ENCODE measurements at regions of chr4 and their contacts with region 1.

Region 1: GRCh38 chr4:68175562-68176155 is 46.0 kb upstream of the TMPRSS11F start:
- DNase-seq: peak in 4 of 5 donors; percentile 11 to 25 (median 17)
- H3K4me3 ChIP-seq: no peak overlapping the region
- H3K4me3 Mint-ChIP-seq: no peak overlapping the region
- H3K27ac ChIP-seq: no peak overlapping the region
- H3K27ac Mint-ChIP-seq: no peak overlapping the region
- H3K4me1 ChIP-seq: no peaks in the 10 kb centered on the region
- H3K4me1 Mint-ChIP-seq: peaks cover 0 to 2% (median under 1%) of the 10 kb centered on the region in 4 donors
- H3K27me3 ChIP-seq: no peaks in the 10 kb centered on the region
- H3K27me3 Mint-ChIP-seq: peaks cover 3 to 4% of the 10 kb centered on the region in 2 donors

Region 2: GRCh38 chr4:66876946-66877345 is 1298.7 kb before region 1 on chr4:
- CTCF ChIA-PET with region 1: no interaction called
- POLR2A ChIA-PET with region 1: no interaction called
- intact Hi-C with region 1: no loop called
- DNase-seq: no peak
- H3K4me3 ChIP-seq: no peak overlapping the region
- H3K4me3 Mint-ChIP-seq: no peak overlapping the region
- H3K27ac ChIP-seq: no peak overlapping the region
- H3K27ac Mint-ChIP-seq: no peak overlapping the region
- H3K4me1 ChIP-seq: no peaks in the 10 kb centered on the region
- H3K4me1 Mint-ChIP-seq: no peaks in the 10 kb centered on the region
- H3K27me3 ChIP-seq: no peaks in the 10 kb centered on the region
- H3K27me3 Mint-ChIP-seq: no peaks in the 10 kb centered on the region

Region 3: DNA sequence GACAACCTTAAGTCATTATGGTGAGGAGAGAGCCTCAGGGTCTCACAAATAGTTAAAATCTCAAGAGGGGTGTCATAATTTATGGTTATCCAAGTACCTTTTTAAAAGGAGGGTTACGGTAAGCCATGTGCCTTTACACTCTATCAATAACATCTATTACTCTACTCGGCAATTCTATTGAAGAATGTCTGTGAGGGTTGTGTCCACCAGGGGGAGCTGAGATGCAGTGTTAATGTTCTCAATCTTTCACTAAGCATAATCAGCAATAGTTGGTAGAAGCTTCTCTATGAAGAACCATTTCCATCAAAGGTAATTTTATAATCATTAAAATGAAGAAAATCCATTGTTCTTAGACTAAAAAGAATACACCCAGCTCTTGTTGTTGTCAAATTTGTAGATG is 1087.8 kb before region 1 on chr4:
- CTCF ChIA-PET with region 1: no interaction called
- POLR2A ChIA-PET with region 1: no interaction called
- intact Hi-C with region 1: loop called (anchors 5 kb)
- DNase-seq: peak in 4 of 5 donors; percentile 2 to 8 (median 4)
- H3K4me3 ChIP-seq: no peak overlapping the region
- H3K4me3 Mint-ChIP-seq: no peak overlapping the region
- H3K27ac ChIP-seq: no peak overlapping the region
- H3K27ac Mint-ChIP-seq: no peak overlapping the region
- H3K4me1 ChIP-seq: no peaks in the 10 kb centered on the region
- H3K4me1 Mint-ChIP-seq: no peaks in the 10 kb centered on the region
- H3K27me3 ChIP-seq: no peaks in the 10 kb centered on the region
- H3K27me3 Mint-ChIP-seq: no peaks in the 10 kb centered on the region

Region 4: DNA sequence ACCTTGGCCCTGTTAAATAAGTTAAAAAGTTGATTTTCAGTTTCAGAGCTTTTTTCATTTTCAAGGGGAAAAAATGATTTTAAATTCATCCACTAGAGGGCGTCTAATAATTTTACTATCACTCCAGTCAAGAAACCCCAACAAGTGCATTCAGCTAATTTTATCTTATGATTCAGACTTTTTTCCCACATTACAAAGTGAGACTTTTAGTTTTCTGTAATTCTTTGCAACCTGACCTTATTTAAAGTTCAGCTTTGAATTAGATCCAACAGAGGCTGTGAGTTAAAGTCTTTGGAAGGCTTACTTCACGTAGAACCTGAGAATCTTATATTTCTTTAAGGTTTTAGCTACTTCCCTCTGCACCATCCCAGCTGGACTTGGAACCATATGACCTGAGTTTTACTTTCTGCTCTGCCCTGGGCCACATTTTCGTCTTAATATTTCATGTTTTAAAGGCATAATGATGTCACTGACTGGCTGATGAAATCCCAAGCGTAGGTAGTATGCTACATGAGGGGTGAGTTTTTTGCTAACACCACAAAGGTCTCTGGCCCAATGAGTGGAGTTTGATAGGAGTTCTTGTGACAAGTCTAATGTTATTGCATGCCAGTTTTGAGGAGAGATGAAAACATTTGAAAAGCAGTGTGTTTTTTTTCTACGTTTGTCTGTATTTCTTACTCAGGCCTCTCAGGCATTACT is 428.7 kb before region 1 on chr4:
- CTCF ChIA-PET with region 1: no interaction called
- POLR2A ChIA-PET with region 1: no interaction called
- intact Hi-C with region 1: loop called (anchors 5 kb)
- DNase-seq: peak in 4 of 5 donors; percentile 24 to 40 (median 28)
- H3K4me3 ChIP-seq: no peak overlapping the region
- H3K4me3 Mint-ChIP-seq: no peak overlapping the region
- H3K27ac ChIP-seq: no peak overlapping the region
- H3K27ac Mint-ChIP-seq: peak overlapping the region in 1 of 7 donors; percentile 8
- H3K4me1 ChIP-seq: no peaks in the 10 kb centered on the region
- H3K4me1 Mint-ChIP-seq: peaks cover 0 to 2% (median 0%) of the 10 kb centered on the region in 4 donors
- H3K27me3 ChIP-seq: no peaks in the 10 kb centered on the region
- H3K27me3 Mint-ChIP-seq: no peaks in the 10 kb centered on the region

Region 5: GRCh38 chr4:67983333-67983732 is 192.3 kb before region 1 on chr4:
- CTCF ChIA-PET with region 1: no interaction called
- POLR2A ChIA-PET with region 1: no interaction called
- intact Hi-C with region 1: loop called (anchors 10 kb)
- DNase-seq: no peak
- H3K4me3 ChIP-seq: no peak overlapping the region
- H3K4me3 Mint-ChIP-seq: no peak overlapping the region
- H3K27ac ChIP-seq: no peak overlapping the region
- H3K27ac Mint-ChIP-seq: no peak overlapping the region
- H3K4me1 ChIP-seq: no peaks in the 10 kb centered on the region
- H3K4me1 Mint-ChIP-seq: no peaks in the 10 kb centered on the region
- H3K27me3 ChIP-seq: no peaks in the 10 kb centered on the region
- H3K27me3 Mint-ChIP-seq: peaks cover 3 to 8% of the 10 kb centered on the region in 2 donors

Region 6: GRCh38 chr4:68271851-68272756 is 96.4 kb after region 1 on chr4:
- CTCF ChIA-PET with region 1: no interaction called
- POLR2A ChIA-PET with region 1: no interaction called
- intact Hi-C with region 1: no loop called
- DNase-seq: peak in 4 of 5 donors; percentile 39 to 42 (median 41)
- H3K4me3 ChIP-seq: no peak overlapping the region
- H3K4me3 Mint-ChIP-seq: peak overlapping the region in 4 of 8 donors; percentile 16 to 63 (median 50)
- H3K27ac ChIP-seq: no peak overlapping the region
- H3K27ac Mint-ChIP-seq: no peak overlapping the region
- H3K4me1 ChIP-seq: no peaks in the 10 kb centered on the region
- H3K4me1 Mint-ChIP-seq: peaks cover 0 to 4% (median 1%) of the 10 kb centered on the region in 4 donors
- H3K27me3 ChIP-seq: no peaks in the 10 kb centered on the region
- H3K27me3 Mint-ChIP-seq: peaks cover 7 to 8% of the 10 kb centered on the region in 2 donors

Region 7: GRCh38 chr4:68476191-68476590 is 300.5 kb after region 1 on chr4:
- CTCF ChIA-PET with region 1: no interaction called
- POLR2A ChIA-PET with region 1: no interaction called
- intact Hi-C with region 1: no loop called
- DNase-seq: no peak
- H3K4me3 ChIP-seq: no peak overlapping the region
- H3K4me3 Mint-ChIP-seq: no peak overlapping the region
- H3K27ac ChIP-seq: no peak overlapping the region
- H3K27ac Mint-ChIP-seq: peak overlapping the region in 1 of 7 donors; percentile 22
- H3K4me1 ChIP-seq: no peaks in the 10 kb centered on the region
- H3K4me1 Mint-ChIP-seq: no peaks in the 10 kb centered on the region
- H3K27me3 ChIP-seq: no peaks in the 10 kb centered on the region
- H3K27me3 Mint-ChIP-seq: no peaks in the 10 kb centered on the region

Region 8: GRCh38 chr4:68708566-68708965 is 532.9 kb after region 1 on chr4:
- CTCF ChIA-PET with region 1: no interaction called
- POLR2A ChIA-PET with region 1: no interaction called
- intact Hi-C with region 1: no loop called
- DNase-seq: no peak
- H3K4me3 ChIP-seq: no peak overlapping the region
- H3K4me3 Mint-ChIP-seq: no peak overlapping the region
- H3K27ac ChIP-seq: no peak overlapping the region
- H3K27ac Mint-ChIP-seq: no peak overlapping the region
- H3K4me1 ChIP-seq: no peaks in the 10 kb centered on the region
- H3K4me1 Mint-ChIP-seq: no peaks in the 10 kb centered on the region
- H3K27me3 ChIP-seq: no peaks in the 10 kb centered on the region
- H3K27me3 Mint-ChIP-seq: no peaks in the 10 kb centered on the region